ENCODE measurements at regions of chr19 and their contacts with region 1.

Region 1: DNA sequence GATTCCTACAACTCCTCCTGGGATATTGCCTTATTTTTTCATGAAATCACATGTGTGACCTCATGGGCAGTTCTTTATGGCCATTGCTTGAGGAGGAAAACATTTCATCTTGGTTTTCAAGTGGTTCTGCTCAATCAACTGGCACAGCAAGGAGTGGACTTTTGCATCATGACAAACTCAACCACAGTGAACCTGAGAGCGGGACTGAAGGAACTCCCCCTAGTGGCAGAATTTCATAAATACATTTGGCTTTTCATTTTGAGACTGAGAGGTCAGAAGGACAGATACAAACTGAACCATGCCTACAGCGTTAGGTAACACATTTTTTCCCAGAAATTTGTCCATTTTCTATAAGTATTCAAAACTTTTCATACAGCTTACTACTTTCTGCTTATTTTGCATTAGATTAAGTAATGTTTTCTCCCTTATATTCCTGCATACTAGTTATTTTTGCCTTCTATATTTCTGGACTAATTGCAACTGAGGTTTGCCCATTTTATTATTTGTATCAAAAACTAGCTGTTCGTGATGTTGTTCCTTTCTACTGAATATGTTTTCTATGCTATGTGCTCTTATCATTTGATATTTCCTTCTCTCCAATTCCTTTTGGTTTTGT is 13.4 kb upstream of the SIGLEC12 start:
- DNase-seq: peak; percentile 28
- H3K4me3 Mint-ChIP-seq: no peak overlapping the region
- H3K27ac Mint-ChIP-seq: no peak overlapping the region
- H3K4me1 Mint-ChIP-seq: peaks cover 12% of the 10 kb centered on the region
- H3K27me3 Mint-ChIP-seq: peaks cover 25% of the 10 kb centered on the region

Region 2: GRCh38 chr19:51651216-51651846 is 136.4 kb after region 1 on chr19:
- CTCF ChIA-PET with region 1: interaction called, 4 read pairs
- POLR2A ChIA-PET with region 1: no interaction called
- intact Hi-C with region 1: loop called (anchors 10 kb)
- DNase-seq: no peak
- H3K4me3 Mint-ChIP-seq: no peak overlapping the region
- H3K27ac Mint-ChIP-seq: no peak overlapping the region
- H3K4me1 Mint-ChIP-seq: no peaks in the 10 kb centered on the region
- H3K27me3 Mint-ChIP-seq: peaks cover 15% of the 10 kb centered on the region

Region 3: DNA sequence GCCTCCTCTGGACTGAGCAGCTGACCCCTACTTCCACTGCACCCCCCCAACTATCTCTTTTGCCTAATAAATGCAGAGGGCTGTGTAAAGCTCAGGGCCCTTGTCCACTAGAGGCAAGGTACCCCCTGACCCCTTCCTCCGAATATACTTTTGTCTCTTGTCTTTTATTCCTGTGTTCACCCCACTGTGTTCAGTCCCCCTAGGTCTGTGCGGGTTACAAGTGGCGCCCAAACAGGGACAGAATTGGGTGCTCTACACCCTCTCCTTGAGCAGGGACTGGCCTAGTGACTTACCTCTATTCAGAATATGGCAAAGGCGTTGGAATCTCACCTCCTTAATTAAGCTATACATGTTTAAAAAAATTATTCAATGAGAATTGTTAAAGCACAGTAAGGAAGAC is 456.6 kb after region 1 on chr19:
- CTCF ChIA-PET with region 1: no interaction called
- POLR2A ChIA-PET with region 1: no interaction called
- intact Hi-C with region 1: no loop called
- DNase-seq: peak; percentile 17
- H3K4me3 Mint-ChIP-seq: no peak overlapping the region
- H3K27ac Mint-ChIP-seq: no peak overlapping the region
- H3K4me1 Mint-ChIP-seq: no peaks in the 10 kb centered on the region
- H3K27me3 Mint-ChIP-seq: no peaks in the 10 kb centered on the region

Measured in activated CD4-positive, alpha-beta memory T cell treated with anti-CD3 and anti-CD28 coated beads for 36 hours (primary cell).